ENCODE measurements at regions of chr2 and their contacts with region 1.

Region 1: GRCh38 chr2:149587220-149587949 is at the start of gene MMADHC:
- DNase-seq: peak; percentile 76 to 97
- H3K4me3 ChIP-seq: peak within 1 kb of the TSS; percentile 72 to 84
- H3K27ac ChIP-seq: peak within 1 kb of the TSS; percentile 89 to 99
- H3K4me1 ChIP-seq: peaks cover 0 to 16% of the 10 kb centered on the region in 2 donors
- H3K27me3 ChIP-seq: no peaks in the 10 kb centered on the region
- CTCF ChIP-seq: no peak
- total RNA-seq, gene MMADHC: 35.8 TPM

Region 2: GRCh38 chr2:148020111-148021058 is 1567.0 kb before region 1 on chr2 and contains the start of gene ORC4:
- intact Hi-C with region 1: loop called (anchors 10 kb)
- DNase-seq: peak; percentile 91 to 99
- H3K4me3 ChIP-seq: peak within 1 kb of the TSS; percentile 81 to 86
- H3K27ac ChIP-seq: peak within 1 kb of the TSS; percentile 89 to 91
- H3K4me1 ChIP-seq: peaks cover 3 to 15% of the 10 kb centered on the region in 2 donors
- H3K27me3 ChIP-seq: no peaks in the 10 kb centered on the region
- CTCF ChIP-seq: peak in 2 of 3 experiments; percentile 17 to 43
- total RNA-seq, gene ORC4: 79.6 TPM

Region 3: GRCh38 chr2:148209603-148210002 is 1377.8 kb before region 1 on chr2:
- intact Hi-C with region 1: no loop called
- DNase-seq: no peak
- H3K4me3 ChIP-seq: no peak overlapping the region
- H3K27ac ChIP-seq: no peak overlapping the region
- H3K4me1 ChIP-seq: no peaks in the 10 kb centered on the region
- H3K27me3 ChIP-seq: no peaks in the 10 kb centered on the region
- CTCF ChIP-seq: no peak

Region 4: DNA sequence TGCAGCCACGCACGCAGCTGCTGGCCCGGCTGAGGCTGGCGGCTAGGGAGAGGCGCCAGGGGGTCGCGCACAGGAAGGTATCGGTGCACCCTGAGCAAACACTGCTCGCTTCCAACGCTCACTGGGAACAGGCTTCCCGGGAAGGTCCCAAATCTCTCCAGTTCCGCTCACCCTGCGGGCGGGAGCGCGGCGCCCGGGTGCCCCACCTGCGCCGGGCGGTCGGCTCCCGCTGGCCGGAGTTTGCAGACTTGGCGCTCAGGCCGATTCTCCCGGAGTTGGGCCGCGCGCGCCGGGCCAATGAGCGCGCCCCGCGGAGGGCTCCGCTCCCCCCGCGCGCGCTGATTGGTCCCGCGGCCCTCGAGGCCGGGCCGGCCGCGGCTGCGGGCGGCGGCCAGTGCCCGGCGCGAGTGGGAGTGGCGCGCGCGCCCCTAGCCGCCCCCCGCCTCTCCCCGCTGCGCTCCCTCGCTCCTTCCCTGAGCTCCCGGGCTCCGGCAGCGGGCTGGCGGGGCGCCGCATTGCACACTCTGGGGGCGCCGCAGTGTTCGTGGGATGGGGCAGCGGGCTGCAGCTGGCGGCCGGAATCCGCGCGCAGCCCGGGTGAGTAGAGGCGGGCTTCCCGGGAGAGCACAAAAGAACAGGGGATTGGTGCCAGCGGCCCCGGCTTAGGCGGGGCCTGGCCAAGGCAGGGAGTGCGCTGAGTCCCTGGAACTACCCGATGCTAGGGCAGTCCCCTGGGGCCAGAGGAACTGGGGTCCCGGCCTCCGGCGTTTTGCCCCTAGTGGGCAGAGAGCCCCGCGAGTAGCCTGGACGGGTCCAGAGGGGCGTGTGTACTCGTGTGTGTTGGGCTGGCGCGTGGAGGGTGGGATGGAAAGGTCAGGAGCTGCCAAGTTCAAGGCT is 257.0 kb before region 1 on chr2 and contains the start of gene LYPD6:
- intact Hi-C with region 1: loop called (anchors 10 kb)
- DNase-seq: peak in 1 of 2 donors; percentile 76
- H3K4me3 ChIP-seq: peak within 1 kb of the TSS; percentile 68 to 82
- H3K27ac ChIP-seq: peak within 1 kb of the TSS in 1 of 2 donors; percentile 19
- H3K4me1 ChIP-seq: peaks cover 0 to 12% of the 10 kb centered on the region in 2 donors
- H3K27me3 ChIP-seq: no peaks in the 10 kb centered on the region
- CTCF ChIP-seq: no peak
- total RNA-seq, gene LYPD6: 1.8 TPM

Region 5: GRCh38 chr2:149743842-149744448 is 156.6 kb after region 1 on chr2:
- intact Hi-C with region 1: no loop called
- DNase-seq: no peak
- H3K4me3 ChIP-seq: no peak overlapping the region
- H3K27ac ChIP-seq: no peak overlapping the region
- H3K4me1 ChIP-seq: no peaks in the 10 kb centered on the region
- H3K27me3 ChIP-seq: no peaks in the 10 kb centered on the region
- CTCF ChIP-seq: no peak

Region 6: GRCh38 chr2:150466741-150467620 is 879.6 kb after region 1 on chr2:
- intact Hi-C with region 1: loop called (anchors 1 kb)
- DNase-seq: no peak
- H3K4me3 ChIP-seq: peak overlapping the region; percentile 9 to 34
- H3K27ac ChIP-seq: peak overlapping the region; percentile 68
- H3K4me1 ChIP-seq: peaks cover 4 to 18% of the 10 kb centered on the region in 2 donors
- H3K27me3 ChIP-seq: no peaks in the 10 kb centered on the region
- CTCF ChIP-seq: no peak

Region 7: GRCh38 chr2:150619607-150620330 is 1032.4 kb after region 1 on chr2:
- intact Hi-C with region 1: loop called (anchors 5 kb)
- DNase-seq: no peak
- H3K4me3 ChIP-seq: no peak overlapping the region
- H3K27ac ChIP-seq: peak overlapping the region; percentile 65 to 76
- H3K4me1 ChIP-seq: peaks cover 0 to 29% of the 10 kb centered on the region in 2 donors
- H3K27me3 ChIP-seq: no peaks in the 10 kb centered on the region
- CTCF ChIP-seq: no peak

Region 8: GRCh38 chr2:151409601-151410484 is 1822.5 kb after region 1 on chr2 and contains the start of gene RIF1:
- intact Hi-C with region 1: loop called (anchors 10 kb)
- DNase-seq: peak; percentile 47 to 93
- H3K4me3 ChIP-seq: peak within 1 kb of the TSS; percentile 78 to 81
- H3K27ac ChIP-seq: peak within 1 kb of the TSS; percentile 85 to 91
- H3K4me1 ChIP-seq: peaks cover 0 to 10% of the 10 kb centered on the region in 2 donors
- H3K27me3 ChIP-seq: no peaks in the 10 kb centered on the region
- CTCF ChIP-seq: peak; percentile 54 to 81 (median 55)
- total RNA-seq, gene RIF1: 10.7 TPM

Measured in ascending aorta (tissue), 2 donors.